Gastrocnemius medialis (tissue), 4 donors: ENCODE measurements at regions of chr4 and their contacts with region 1.

Region 1: DNA sequence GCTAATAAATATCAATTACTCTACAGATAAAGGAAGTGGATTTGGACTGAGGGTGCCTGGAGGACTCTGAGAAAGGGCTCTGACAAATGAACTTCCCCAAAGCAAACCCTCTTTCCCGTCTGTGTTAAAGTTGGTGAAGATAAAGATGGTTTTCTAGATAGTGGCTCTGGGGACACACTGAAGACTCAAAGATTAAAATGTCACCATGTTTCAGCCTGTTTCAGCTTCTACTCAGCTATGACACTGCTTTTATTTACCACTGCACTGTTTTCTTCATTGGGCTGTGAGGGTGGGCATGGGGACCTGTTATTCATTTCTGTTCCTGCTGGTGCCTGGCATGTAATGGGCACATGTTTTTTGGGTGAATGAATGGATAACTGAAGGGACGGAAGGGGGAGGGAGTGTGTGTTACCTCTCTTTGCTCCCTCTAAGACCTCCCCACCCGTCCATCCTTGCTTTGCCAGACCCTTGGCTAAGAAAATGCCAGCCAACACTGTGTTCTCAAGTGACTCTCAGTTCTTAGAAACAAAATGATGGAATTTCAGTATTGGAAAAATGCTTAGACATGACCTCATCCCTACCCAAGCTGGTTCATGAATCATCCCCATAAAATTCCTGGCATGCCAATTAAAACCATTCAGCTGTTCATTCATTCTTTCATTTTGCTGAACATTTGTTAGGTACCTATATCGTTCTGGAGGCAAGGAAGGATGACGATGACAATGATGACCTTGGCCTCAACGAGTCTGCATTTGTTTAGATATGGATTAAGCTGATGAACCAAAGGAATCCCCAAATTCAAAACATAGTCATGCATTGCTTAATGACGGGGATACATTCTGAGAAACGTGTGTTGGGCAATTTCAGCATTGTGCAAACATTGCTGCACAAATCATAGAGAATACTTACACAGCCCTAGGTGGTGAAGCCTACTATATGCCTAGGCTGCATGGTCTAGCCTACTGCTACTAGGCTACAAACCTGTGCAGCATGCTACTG is 13.4 kb upstream of the STK32B start:
- DNase-seq: no peak
- ATAC-seq: peak in 1 of 2 donors; percentile 41
- H3K4me3 ChIP-seq: no peak overlapping the region
- H3K27ac ChIP-seq: no peak overlapping the region
- H3K4me1 ChIP-seq: peaks cover 0 to 11% of the 10 kb centered on the region in 2 donors
- H3K27me3 ChIP-seq: no peaks in the 10 kb centered on the region
- CTCF ChIP-seq: no peak
- POLR2A ChIP-seq: no peak

Region 2: GRCh38 chr4:5812506-5813229 is 774.8 kb after region 1 on chr4:
- in situ Hi-C with region 1: loop called in 1 of 4 experiments (anchors 25 kb)
- intact Hi-C with region 1: no loop called
- DNase-seq: no peak
- ATAC-seq: no peak
- H3K4me3 ChIP-seq: no peak overlapping the region
- H3K27ac ChIP-seq: no peak overlapping the region
- H3K4me1 ChIP-seq: no peaks in the 10 kb centered on the region
- H3K27me3 ChIP-seq: no peaks in the 10 kb centered on the region
- CTCF ChIP-seq: peak in 4 of 5 experiments; percentile 18 to 48 (median 40)
- POLR2A ChIP-seq: no peak